Activated B cell treated with CpG ODN at 0.5 μM for 24 hours (primary cell): ENCODE measurements at regions of chr10 and their contacts with region 1.

Region 1: DNA sequence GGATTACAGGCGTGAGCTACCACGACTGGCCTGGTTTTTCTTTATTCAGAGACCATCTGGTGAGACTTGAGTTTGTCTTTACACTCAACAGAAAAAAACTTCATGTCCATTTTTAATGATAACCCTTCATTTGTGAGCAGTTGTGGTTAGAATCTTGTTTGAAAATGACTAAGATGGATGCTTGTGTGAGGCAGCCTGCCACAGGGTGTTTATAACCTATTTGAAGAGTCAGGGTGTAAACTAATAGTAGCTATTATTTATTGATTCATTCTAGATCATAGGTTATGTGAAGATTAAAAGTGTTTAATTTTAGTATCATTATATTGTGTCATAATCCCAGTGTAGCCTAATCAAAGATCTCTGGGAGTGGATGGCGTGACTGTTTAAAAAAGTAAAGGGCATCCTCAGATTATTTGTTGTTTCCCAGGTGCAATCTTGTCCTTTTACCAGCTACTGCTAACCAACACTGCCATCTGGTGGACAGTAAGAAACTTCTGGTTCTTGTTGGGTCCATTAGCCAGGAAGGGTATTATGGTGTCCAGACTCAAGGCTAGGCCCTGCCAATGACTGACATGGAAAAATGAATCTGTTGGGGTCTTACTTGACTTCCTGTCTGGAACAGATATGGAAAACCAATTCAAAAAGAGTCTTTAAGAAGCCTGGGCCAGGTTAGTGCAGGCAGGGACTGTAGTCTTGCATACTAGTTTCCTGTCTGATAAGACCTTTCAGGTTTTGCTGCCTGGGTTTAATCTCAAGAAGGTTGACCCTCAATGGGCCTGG is 24.9 kb downstream of the NRBF2 start:
- DNase-seq: no peak
- ATAC-seq: peak; percentile 67
- H3K4me3 Mint-ChIP-seq: no peak overlapping the region
- H3K27ac Mint-ChIP-seq: no peak overlapping the region
- H3K4me1 Mint-ChIP-seq: peaks cover 9% of the 10 kb centered on the region
- H3K27me3 Mint-ChIP-seq: no peaks in the 10 kb centered on the region
- CTCF ChIP-seq: no peak

Region 2: DNA sequence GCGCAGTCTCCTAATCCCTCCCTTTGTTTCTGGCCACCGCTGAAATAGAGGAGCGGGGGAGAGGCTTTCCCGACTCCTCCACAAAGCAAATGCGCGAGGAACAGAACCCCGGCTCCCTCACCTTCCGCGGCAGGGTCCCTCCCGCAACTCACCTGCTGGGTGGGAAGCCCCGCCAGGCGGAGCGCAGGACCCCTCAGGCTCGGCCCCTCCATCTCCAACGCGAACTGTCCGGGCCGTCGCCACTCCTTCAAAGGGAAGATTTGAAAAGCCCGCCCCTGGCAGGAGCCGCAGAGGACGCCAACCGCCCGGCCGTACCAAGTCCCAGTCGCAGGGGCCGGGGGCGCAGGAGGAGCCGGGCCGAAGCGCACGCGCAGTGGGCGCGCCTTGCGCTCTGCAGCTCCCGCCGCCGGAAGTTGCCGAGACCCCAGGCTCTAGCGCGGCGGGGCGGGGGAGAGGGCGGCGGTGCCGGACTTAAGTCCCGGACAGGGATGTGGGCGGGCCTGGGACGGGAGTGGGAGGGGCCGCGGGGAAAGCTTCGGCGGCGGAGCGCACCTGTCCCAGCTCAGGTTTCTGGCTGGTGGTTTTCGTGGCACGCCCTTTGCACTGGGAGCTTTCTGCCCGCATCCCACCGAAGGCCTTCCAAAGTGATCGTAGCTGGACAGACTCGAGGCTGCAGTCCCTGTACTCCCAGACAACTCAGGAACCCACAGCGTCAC is 889.5 kb before region 1 on chr10 and contains the start of gene RTKN2:
- CTCF ChIA-PET with region 1: interaction called, 10 read pairs
- POLR2A ChIA-PET with region 1: no interaction called
- intact Hi-C with region 1: loop called (anchors 2 kb)
- DNase-seq: peak; percentile 64
- ATAC-seq: peak; percentile 91
- H3K4me3 Mint-ChIP-seq: peak within 1 kb of the TSS; percentile 87
- H3K27ac Mint-ChIP-seq: peak within 1 kb of the TSS; percentile 31
- H3K4me1 Mint-ChIP-seq: peaks cover 13% of the 10 kb centered on the region
- H3K27me3 Mint-ChIP-seq: peaks cover 3% of the 10 kb centered on the region
- CTCF ChIP-seq: no peak
- total RNA-seq, gene RTKN2: 0.09 and 0.17 TPM in 2 replicates

Region 3: GRCh38 chr10:62594093-62594520 is 563.9 kb before region 1 on chr10:
- CTCF ChIA-PET with region 1: interaction called, 31 read pairs
- POLR2A ChIA-PET with region 1: no interaction called
- intact Hi-C with region 1: loop called (anchors 1 kb)
- DNase-seq: peak; percentile 41
- ATAC-seq: peak; percentile 88
- H3K4me3 Mint-ChIP-seq: no peak overlapping the region
- H3K27ac Mint-ChIP-seq: no peak overlapping the region
- H3K4me1 Mint-ChIP-seq: peaks cover 16% of the 10 kb centered on the region
- H3K27me3 Mint-ChIP-seq: no peaks in the 10 kb centered on the region
- CTCF ChIP-seq: peak; percentile 74

Region 4: GRCh38 chr10:63003816-63004453 is 154.1 kb before region 1 on chr10:
- CTCF ChIA-PET with region 1: interaction called, 3 read pairs
- POLR2A ChIA-PET with region 1: no interaction called
- intact Hi-C with region 1: loop called (anchors 1 kb)
- DNase-seq: no peak
- ATAC-seq: no peak
- H3K4me3 Mint-ChIP-seq: no peak overlapping the region
- H3K27ac Mint-ChIP-seq: no peak overlapping the region
- H3K4me1 Mint-ChIP-seq: no peaks in the 10 kb centered on the region
- H3K27me3 Mint-ChIP-seq: peaks cover 12% of the 10 kb centered on the region
- CTCF ChIP-seq: no peak

Region 5: DNA sequence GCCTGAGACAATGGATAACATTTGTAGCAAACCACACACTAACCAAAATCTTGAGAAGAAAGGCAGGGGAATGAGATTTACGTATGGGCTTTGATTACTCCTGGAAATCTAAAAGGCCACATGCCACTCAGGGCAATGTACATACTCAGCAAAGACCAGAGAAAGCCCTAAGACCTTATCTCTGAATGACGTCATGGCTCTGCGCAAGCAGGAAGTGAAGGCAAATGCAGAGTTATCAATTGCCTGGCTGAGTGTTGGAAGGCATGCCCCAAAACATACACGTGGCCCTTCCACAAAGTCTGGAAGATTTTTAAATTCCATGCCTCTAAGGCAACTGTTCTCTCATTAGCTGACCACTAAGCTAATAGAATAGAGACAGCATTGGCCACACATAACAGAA is 115.8 kb before region 1 on chr10:
- CTCF ChIA-PET with region 1: no interaction called
- POLR2A ChIA-PET with region 1: no interaction called
- intact Hi-C with region 1: no loop called
- DNase-seq: no peak
- ATAC-seq: no peak
- H3K4me3 Mint-ChIP-seq: no peak overlapping the region
- H3K27ac Mint-ChIP-seq: no peak overlapping the region
- H3K4me1 Mint-ChIP-seq: no peaks in the 10 kb centered on the region
- H3K27me3 Mint-ChIP-seq: peaks cover 24% of the 10 kb centered on the region
- CTCF ChIP-seq: no peak

Region 6: GRCh38 chr10:63064706-63065105 is 93.3 kb before region 1 on chr10:
- CTCF ChIA-PET with region 1: no interaction called
- POLR2A ChIA-PET with region 1: no interaction called
- intact Hi-C with region 1: no loop called
- DNase-seq: no peak
- ATAC-seq: no peak
- H3K4me3 Mint-ChIP-seq: no peak overlapping the region
- H3K27ac Mint-ChIP-seq: no peak overlapping the region
- H3K4me1 Mint-ChIP-seq: no peaks in the 10 kb centered on the region
- H3K27me3 Mint-ChIP-seq: peaks cover 35% of the 10 kb centered on the region
- CTCF ChIP-seq: no peak

Region 7: GRCh38 chr10:63083904-63084689 is 73.9 kb before region 1 on chr10:
- CTCF ChIA-PET with region 1: interaction called, 6 read pairs
- POLR2A ChIA-PET with region 1: no interaction called
- intact Hi-C with region 1: loop called (anchors 2 kb)
- DNase-seq: no peak
- ATAC-seq: peak; percentile 77
- H3K4me3 Mint-ChIP-seq: no peak overlapping the region
- H3K27ac Mint-ChIP-seq: no peak overlapping the region
- H3K4me1 Mint-ChIP-seq: no peaks in the 10 kb centered on the region
- H3K27me3 Mint-ChIP-seq: peaks cover 9% of the 10 kb centered on the region
- CTCF ChIP-seq: peak; percentile 53

Region 8: DNA sequence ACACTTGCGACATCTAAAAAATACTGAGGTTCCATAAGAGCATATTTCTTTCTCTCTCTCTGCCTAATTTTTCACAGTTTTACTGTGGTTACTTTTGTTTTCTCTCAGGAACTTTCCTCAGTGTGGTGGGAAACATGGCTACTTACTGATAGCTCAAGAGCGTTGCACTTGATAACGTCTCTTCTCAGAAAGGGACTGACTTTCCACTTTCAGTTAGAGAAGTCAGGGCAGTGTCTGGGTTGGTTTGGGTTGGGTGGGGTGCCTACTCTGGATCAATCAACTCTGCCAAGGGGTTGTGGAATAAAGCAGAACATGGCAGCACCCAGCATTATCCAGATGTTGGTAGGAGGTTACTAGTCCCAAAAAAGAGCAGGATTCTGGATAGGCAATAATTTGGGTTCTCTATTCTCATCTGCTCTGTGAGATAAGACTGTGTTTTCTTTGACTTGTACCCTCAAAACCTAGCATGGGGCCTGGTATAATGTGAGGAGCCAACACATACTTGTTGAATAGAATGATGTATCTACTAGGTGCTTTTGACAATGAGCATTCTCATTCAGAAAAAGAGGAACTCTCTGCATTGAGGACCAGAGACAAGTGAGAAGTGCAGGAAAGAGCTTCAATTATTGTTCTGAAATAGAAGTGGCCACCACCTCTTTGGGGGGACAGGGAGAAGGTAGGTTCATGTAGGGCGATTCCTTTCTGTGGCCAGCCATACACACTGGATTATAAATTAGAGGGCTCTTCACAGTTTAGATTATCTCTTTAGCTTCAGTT is 678.8 kb after region 1 on chr10:
- CTCF ChIA-PET with region 1: no interaction called
- POLR2A ChIA-PET with region 1: no interaction called
- intact Hi-C with region 1: no loop called
- DNase-seq: no peak
- ATAC-seq: no peak
- H3K4me3 Mint-ChIP-seq: no peak overlapping the region
- H3K27ac Mint-ChIP-seq: no peak overlapping the region
- H3K4me1 Mint-ChIP-seq: no peaks in the 10 kb centered on the region
- H3K27me3 Mint-ChIP-seq: peaks cover 18% of the 10 kb centered on the region
- CTCF ChIP-seq: no peak